ENCODE measurements at regions of chr5 and their contacts with region 1.

Region 1: GRCh38 chr5:94613583-94613982 is 4.8 kb downstream of the KIAA0825 start:
- DNase-seq: peak; percentile 35
- ATAC-seq: no peak
- H3K4me3 ChIP-seq: no peak overlapping the region
- H3K4me3 Mint-ChIP-seq: no peak overlapping the region
- H3K27ac ChIP-seq: no peak overlapping the region
- H3K27ac Mint-ChIP-seq: no peak overlapping the region
- H3K4me1 ChIP-seq: peaks cover 7 to 8% of the 10 kb centered on the region in 2 donors
- H3K4me1 Mint-ChIP-seq: peaks cover 11% of the 10 kb centered on the region
- H3K27me3 ChIP-seq: no peaks in the 10 kb centered on the region
- H3K27me3 Mint-ChIP-seq: no peaks in the 10 kb centered on the region
- CTCF ChIP-seq: no peak

Region 2: DNA sequence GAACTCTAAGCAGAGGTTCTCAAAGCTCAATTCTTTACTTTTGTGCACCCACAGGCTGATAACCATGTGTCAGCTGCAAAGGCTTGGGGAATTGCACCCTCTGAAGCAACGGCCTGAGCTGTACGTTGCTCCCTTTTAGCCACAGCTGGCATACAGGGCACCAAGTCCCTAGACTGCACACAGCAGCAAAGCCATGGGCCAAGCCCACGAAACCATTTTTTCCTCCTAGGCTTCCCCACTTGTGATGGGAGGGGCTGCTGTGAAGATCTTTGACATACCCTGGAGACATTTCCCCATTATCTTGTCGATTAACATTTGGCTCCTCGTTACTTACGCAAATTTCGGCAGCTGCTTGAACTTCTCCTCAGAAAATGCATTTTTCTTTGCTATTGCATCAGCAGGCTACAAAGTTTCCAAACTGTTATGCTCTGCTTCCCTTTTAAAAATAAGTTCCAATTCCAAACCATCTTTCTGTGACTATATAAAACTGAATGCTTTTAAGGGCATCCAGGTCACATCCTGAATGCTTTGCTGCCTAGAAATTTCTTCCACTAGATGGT is 18.2 kb before region 1 on chr5:
- CTCF ChIA-PET with region 1: no interaction called
- POLR2A ChIA-PET with region 1: no interaction called
- intact Hi-C with region 1: no loop called
- DNase-seq: no peak
- ATAC-seq: no peak
- H3K4me3 ChIP-seq: no peak overlapping the region
- H3K4me3 Mint-ChIP-seq: no peak overlapping the region
- H3K27ac ChIP-seq: no peak overlapping the region
- H3K27ac Mint-ChIP-seq: no peak overlapping the region
- H3K4me1 ChIP-seq: no peaks in the 10 kb centered on the region
- H3K4me1 Mint-ChIP-seq: no peaks in the 10 kb centered on the region
- H3K27me3 ChIP-seq: no peaks in the 10 kb centered on the region
- H3K27me3 Mint-ChIP-seq: no peaks in the 10 kb centered on the region
- CTCF ChIP-seq: no peak

Region 3: GRCh38 chr5:94661086-94661485 is 47.5 kb after region 1 on chr5:
- CTCF ChIA-PET with region 1: no interaction called
- POLR2A ChIA-PET with region 1: no interaction called
- intact Hi-C with region 1: no loop called
- DNase-seq: no peak
- ATAC-seq: no peak
- H3K4me3 ChIP-seq: no peak overlapping the region
- H3K4me3 Mint-ChIP-seq: no peak overlapping the region
- H3K27ac ChIP-seq: no peak overlapping the region
- H3K27ac Mint-ChIP-seq: no peak overlapping the region
- H3K4me1 ChIP-seq: no peaks in the 10 kb centered on the region
- H3K4me1 Mint-ChIP-seq: no peaks in the 10 kb centered on the region
- H3K27me3 ChIP-seq: no peaks in the 10 kb centered on the region
- H3K27me3 Mint-ChIP-seq: no peaks in the 10 kb centered on the region
- CTCF ChIP-seq: no peak

Region 4: DNA sequence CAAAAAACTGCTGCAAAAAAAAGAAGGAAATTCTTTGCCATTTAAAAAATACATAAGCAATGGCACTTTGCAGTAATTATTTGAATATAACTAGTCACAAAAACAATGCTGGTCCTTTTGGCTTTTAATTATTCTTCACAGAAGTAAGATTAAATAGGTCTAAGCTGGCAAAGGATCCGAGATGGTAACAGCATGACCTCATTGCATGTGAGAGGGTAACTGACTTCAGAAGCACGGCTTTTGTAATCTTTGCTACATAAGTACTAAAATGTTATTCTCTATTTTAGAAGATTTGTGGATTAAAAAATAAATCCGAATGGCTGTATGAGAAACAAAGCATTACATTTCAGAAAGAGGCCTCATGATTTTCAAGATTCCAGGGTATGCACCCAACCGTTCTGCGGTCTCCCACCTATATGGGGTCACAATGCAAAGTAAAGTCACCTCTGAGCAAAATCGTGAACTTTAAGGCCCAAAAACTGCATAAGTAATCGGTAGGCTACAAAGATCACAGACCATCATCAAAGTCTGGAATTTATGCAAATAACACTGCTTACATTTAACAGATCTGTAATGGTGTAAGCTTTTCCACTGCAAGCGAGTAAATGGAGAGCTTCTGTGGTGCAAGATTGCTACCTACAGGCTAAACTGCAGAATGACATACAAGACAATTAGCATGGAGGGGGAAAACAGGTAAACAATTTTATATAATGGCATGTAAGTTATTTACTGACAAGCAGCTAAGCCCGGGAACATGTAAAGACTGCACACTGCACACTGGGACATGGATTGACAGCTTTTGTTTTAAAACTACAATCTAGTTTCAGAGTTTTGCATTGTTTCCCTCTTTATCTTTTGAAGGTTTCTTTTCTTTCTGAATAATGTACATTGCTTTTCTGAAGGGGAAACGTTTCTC is 236.5 kb after region 1 on chr5:
- CTCF ChIA-PET with region 1: no interaction called
- POLR2A ChIA-PET with region 1: no interaction called
- intact Hi-C with region 1: loop called (anchors 2 kb)
- DNase-seq: peak; percentile 41
- ATAC-seq: peak; percentile 76
- H3K4me3 ChIP-seq: no peak overlapping the region
- H3K4me3 Mint-ChIP-seq: no peak overlapping the region
- H3K27ac ChIP-seq: no peak overlapping the region
- H3K27ac Mint-ChIP-seq: no peak overlapping the region
- H3K4me1 ChIP-seq: no peaks in the 10 kb centered on the region
- H3K4me1 Mint-ChIP-seq: peaks cover 3% of the 10 kb centered on the region
- H3K27me3 ChIP-seq: no peaks in the 10 kb centered on the region
- H3K27me3 Mint-ChIP-seq: no peaks in the 10 kb centered on the region
- CTCF ChIP-seq: peak; percentile 64